Activated CD8-positive, alpha-beta memory T cell treated with anti-CD3 and anti-CD28 coated beads, Interleukin-2, amount 10 ng/mL, durations not matched to agents 7 days and 5 days (primary cell): ENCODE measurements at regions of chr13 and their contacts with region 1.

Region 1: DNA sequence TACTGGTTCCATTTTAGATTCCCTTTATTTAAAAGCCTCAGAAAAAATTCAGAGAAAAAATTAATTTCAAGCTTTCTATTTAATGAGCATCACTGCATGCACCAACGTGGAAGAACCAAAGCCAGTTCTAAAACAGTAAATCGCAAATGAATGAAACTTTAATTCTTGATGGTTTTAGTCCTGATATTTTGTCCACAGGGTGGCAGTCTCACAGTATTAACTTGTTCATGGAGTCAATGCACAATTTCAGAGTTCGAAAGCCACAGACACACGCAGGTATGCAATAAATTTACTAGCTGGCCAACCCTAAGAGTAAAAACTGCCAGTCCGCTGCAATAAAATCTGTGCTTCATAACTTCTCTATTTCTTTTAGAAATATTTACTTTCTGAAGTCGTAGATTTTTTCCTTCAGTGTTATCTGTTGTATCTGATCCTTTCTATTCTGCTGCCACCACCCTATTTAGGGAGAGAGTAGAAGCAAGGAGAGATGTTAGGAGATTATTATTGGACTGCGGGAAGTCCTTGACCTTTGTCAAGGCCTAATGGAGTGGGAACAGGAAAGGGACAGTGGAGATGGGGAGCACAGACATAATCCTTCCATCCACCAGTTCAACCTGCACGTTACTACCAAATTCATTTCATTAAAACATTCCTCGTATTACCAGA is 7.0 kb upstream of the WBP4 start:
- DNase-seq: peak; percentile 54
- ATAC-seq: peak; percentile 73
- H3K4me3 Mint-ChIP-seq: peak overlapping the region; percentile 14
- H3K27ac Mint-ChIP-seq: no peak overlapping the region
- H3K4me1 Mint-ChIP-seq: peaks cover 58% of the 10 kb centered on the region
- H3K27me3 Mint-ChIP-seq: no peaks in the 10 kb centered on the region

Region 2: DNA sequence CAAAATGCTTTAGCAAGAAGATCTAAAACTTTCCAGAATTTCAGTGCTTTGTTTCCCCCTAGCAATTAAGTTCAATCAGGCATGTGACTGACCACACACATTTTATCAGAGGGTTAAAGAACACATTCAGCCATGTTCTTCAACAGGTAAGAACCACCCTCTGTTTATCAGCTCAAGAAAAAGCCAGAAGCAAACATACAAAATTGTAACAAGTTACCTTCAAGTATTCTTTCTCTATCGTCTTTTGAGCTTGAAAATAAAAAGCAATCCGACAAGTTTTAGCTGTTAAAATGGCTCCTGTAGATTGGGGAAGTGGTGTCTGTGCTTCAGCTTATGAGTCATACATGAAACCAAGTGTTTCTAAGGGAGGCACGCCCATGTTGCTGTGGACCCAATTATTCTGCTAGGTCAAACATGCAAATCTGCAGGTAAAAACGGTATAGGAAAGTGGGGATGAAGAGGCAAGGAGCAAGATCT is 35.3 kb before region 1 on chr13 and contains the start of gene ELF1:
- CTCF ChIA-PET with region 1: interaction called, 29 read pairs
- DNase-seq: peak; percentile 81
- ATAC-seq: peak; percentile 93
- H3K4me3 Mint-ChIP-seq: peak within 1 kb of the TSS; percentile 90
- H3K27ac Mint-ChIP-seq: peak within 1 kb of the TSS; percentile 97
- H3K4me1 Mint-ChIP-seq: peaks cover 47% of the 10 kb centered on the region
- H3K27me3 Mint-ChIP-seq: no peaks in the 10 kb centered on the region
- total RNA-seq, gene ELF1: 120 to 143 TPM

Region 3: DNA sequence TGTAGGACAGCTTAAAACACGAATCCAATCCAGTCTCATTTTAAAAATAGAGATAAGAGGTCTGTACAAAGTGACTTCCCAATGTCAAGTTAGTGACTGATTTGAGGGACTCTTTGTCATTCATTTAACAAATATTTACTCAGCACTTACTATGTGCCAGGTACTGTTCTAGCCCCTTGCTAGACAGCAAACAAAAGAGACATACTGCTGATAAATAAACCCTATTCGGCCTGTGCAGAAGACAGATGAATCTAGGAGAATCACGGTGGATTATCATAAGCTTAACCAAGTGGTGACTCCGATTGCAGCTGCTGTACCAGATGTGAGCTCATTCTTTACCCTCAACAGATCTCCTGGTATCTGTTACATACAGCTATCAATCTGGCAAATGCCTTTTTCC is 28.8 kb before region 1 on chr13:
- CTCF ChIA-PET with region 1: interaction called, 29 read pairs
- DNase-seq: no peak
- ATAC-seq: no peak
- H3K4me3 Mint-ChIP-seq: no peak overlapping the region
- H3K27ac Mint-ChIP-seq: no peak overlapping the region
- H3K4me1 Mint-ChIP-seq: peaks cover 43% of the 10 kb centered on the region
- H3K27me3 Mint-ChIP-seq: no peaks in the 10 kb centered on the region

Region 4: DNA sequence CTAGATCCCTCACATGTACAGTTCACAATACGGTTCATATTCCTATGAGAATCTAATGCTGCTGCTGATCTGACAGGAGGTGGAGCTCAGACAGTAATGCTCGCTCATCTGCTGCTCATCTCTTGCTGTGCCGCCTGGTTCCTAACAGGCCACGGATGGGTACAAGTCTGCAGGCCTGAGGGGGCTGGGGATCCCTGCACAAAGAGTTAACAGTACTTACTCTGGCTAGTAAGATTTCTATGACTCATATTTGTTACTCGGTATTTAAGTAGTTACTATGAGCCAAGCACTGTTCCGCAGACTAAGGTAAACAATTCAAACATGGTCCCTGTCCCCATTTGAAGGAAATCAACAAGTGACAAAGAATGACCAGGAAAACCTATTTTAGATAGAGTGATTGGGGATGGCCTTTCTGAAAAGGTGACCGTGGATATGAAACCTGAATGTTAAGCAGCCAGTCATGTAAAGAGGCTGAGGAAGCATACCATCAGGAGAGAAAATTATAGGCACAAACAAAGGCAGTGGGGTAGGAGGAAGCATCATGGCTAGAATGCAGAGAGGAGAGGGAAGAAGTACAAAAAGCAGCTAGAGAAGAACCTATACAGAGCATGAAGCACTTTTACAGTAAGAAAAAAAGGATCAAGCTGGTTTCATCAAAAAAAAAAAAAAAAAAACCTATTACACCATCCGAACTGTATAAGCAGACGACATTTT is 13.6 kb before region 1 on chr13:
- CTCF ChIA-PET with region 1: interaction called, 16 read pairs
- DNase-seq: no peak
- ATAC-seq: no peak
- H3K4me3 Mint-ChIP-seq: no peak overlapping the region
- H3K27ac Mint-ChIP-seq: no peak overlapping the region
- H3K4me1 Mint-ChIP-seq: peaks cover 2% of the 10 kb centered on the region
- H3K27me3 Mint-ChIP-seq: no peaks in the 10 kb centered on the region

Region 5: GRCh38 chr13:41101866-41102265 is 47.5 kb after region 1 on chr13:
- CTCF ChIA-PET with region 1: no interaction called
- DNase-seq: no peak
- ATAC-seq: no peak
- H3K4me3 Mint-ChIP-seq: no peak overlapping the region
- H3K27ac Mint-ChIP-seq: no peak overlapping the region
- H3K4me1 Mint-ChIP-seq: no peaks in the 10 kb centered on the region
- H3K27me3 Mint-ChIP-seq: peaks cover 12% of the 10 kb centered on the region

Region 6: DNA sequence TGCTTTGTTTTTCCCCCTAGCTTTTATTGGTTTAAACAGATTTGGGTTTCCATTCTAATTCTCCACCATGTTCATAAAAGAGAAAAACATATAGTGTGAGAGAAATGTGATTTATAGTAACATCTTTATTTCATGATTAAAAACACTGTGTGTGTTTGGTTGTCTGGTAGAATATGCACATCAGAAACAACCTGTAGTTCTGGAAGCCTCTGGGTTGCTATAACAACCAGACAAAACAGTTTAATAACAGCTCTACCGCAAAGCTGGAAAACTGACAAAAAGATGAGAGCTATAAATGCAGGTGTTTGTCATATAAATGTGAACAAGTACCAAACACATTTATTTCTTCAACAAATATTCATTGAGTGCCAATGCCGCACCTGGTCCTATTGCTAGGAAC is 68.5 kb after region 1 on chr13:
- CTCF ChIA-PET with region 1: no interaction called
- DNase-seq: no peak
- ATAC-seq: no peak
- H3K4me3 Mint-ChIP-seq: no peak overlapping the region
- H3K27ac Mint-ChIP-seq: no peak overlapping the region
- H3K4me1 Mint-ChIP-seq: no peaks in the 10 kb centered on the region
- H3K27me3 Mint-ChIP-seq: no peaks in the 10 kb centered on the region

Region 7: DNA sequence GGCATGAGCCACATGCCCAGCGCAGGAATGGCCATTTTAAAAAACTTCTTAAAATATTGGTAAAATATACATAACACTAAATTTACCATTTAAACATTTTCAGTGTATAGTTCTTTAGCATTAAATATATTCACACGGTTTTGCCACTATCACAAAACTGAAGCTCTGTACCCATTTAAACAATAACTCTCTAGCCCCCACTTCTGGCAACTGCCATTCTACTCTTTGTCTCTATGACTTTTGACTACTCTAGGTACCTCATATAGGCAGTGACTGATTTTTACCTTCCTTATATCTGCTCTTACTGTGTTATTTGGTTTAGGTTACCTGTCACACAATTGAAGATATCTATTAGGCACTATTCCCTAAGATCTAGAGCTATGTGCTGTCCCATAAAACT is 142.3 kb after region 1 on chr13:
- CTCF ChIA-PET with region 1: interaction called, 13 read pairs
- DNase-seq: no peak
- ATAC-seq: no peak
- H3K4me3 Mint-ChIP-seq: no peak overlapping the region
- H3K27ac Mint-ChIP-seq: no peak overlapping the region
- H3K4me1 Mint-ChIP-seq: peaks cover 38% of the 10 kb centered on the region
- H3K27me3 Mint-ChIP-seq: no peaks in the 10 kb centered on the region

Region 8: DNA sequence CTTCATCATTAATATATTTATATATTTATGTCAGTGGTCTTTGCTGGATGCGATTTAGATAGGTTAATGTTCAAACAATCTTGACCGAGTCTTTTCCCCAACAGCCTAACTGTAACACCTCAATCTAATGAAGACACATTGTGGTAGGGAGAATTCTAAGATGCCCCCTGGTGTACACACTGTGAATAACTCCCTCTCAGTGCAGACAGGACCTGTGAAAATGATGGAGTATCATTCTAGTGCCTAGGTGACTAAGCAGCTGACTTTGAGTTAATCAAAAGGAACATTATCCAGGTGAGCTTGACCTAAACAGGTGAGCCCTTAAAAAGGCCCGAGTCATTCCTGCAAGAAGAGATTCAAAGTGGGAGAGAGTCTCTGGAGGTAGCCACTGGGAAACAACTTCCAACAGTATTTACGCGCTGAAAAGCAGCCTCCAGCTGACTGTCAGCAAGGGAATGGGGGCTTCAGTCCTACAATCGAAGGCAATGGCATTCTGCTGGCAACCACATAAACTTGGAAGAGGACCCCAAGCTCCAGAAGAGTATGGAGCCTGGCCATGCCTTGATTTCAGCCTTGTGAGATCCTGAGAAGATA is 168.0 kb after region 1 on chr13:
- CTCF ChIA-PET with region 1: interaction called, 23 read pairs
- DNase-seq: peak; percentile 68
- ATAC-seq: peak; percentile 80
- H3K4me3 Mint-ChIP-seq: no peak overlapping the region
- H3K27ac Mint-ChIP-seq: no peak overlapping the region
- H3K4me1 Mint-ChIP-seq: peaks cover 8% of the 10 kb centered on the region
- H3K27me3 Mint-ChIP-seq: no peaks in the 10 kb centered on the region